ENCODE measurements at regions of chr17 and their contacts with region 1.

Region 1: DNA sequence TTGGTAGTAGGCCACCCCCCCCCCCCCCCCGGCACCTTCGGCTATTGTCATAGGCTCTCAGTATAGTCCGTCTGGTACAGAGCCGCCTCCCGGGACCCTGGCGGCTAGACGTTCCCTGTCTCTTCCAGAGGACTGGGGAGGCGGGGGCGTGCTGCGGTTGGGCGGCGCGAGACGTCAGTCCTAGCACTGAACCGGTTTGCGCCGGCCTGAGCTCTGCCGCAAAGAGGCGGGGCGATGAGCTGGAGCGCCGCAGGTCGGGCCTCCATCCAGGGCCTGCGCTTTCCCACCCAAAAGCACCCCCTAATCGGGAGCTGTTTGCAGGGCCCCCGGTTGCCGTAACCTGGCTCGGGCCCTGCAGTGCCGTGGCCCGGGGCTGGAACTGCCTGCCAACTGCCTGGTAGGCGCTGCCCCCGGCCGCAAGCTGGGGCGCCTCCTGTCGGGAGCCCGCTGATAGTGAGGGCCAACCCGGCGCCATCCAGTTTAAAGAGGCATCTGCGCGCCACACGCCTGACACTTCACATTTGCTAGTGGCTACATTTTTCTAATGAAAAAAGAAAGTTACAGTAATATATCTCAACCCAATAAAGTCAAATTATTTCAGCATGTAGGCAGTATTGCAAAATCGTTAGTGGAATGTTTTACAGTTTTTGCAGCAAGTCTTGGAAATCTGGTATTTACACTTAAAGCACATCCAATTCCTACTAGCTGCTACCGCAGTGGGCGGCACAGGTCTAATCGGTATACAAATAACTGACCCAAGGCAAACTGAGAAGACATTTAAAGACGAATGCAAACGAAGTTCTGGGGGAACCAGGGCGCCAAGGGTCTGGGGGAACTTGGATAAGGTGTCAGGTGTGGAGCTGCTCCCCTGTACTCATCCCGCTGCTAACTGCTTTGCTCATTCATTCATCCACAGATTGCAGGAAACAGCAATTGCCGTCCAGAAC is 748 bp upstream of the USP22 start:
- DNase-seq: peak in 1 of 2 donors; percentile 99
- H3K4me3 ChIP-seq: peak overlapping the region; percentile 81 to 82
- H3K27ac ChIP-seq: peak overlapping the region; percentile 72 to 89
- H3K4me1 ChIP-seq: peaks cover 4 to 21% of the 10 kb centered on the region in 2 donors
- H3K27me3 ChIP-seq: no peaks in the 10 kb centered on the region
- CTCF ChIP-seq: peak; percentile 88 to 93 (median 92)

Region 2: GRCh38 chr17:21010705-21011606 is 32.6 kb before region 1 on chr17:
- intact Hi-C with region 1: loop called (anchors 5 kb)
- DNase-seq: no peak
- H3K4me3 ChIP-seq: no peak overlapping the region
- H3K27ac ChIP-seq: no peak overlapping the region
- H3K4me1 ChIP-seq: no peaks in the 10 kb centered on the region
- H3K27me3 ChIP-seq: no peaks in the 10 kb centered on the region
- CTCF ChIP-seq: no peak

Region 3: DNA sequence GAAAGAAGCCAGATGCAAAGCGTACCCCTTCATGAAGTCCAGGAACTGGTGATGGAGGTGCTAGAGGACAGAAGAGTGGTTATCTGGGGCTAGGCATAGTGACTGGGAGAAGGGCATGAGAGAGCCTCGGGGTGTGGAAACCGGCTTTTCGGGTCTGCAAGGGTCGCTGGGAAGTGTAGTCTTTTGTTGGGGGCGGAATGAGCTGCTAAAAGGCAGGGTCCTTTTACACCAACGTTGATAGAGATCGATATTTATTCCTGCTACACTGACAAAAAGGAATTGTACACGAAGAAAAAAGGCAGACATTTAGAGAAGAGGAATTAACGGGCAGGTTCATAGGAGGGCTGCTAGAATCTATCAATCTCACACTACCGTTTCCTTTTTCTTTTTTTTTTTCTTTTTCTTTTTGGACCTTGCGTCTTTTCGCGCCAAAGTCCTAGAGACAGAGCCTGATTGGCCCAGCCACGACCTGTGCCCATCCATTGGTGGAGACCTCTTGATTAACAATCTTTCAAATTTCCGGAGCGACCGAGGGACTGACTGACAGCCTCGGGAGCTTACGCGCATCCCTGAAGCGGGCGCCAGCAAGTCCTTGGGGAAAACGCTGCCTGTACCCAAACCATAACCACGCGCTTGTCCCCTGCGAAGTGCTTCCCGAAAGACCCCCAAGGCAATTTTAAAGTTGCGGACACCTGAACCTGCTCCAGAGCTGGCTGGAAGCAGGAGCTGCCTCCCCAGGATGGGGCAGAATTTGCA is 55.6 kb after region 1 on chr17:
- intact Hi-C with region 1: loop called (anchors 5 kb)
- DNase-seq: peak in 1 of 2 donors; percentile 73
- H3K4me3 ChIP-seq: peak overlapping the region; percentile 56 to 77
- H3K27ac ChIP-seq: no peak overlapping the region
- H3K4me1 ChIP-seq: peaks cover 0 to 5% of the 10 kb centered on the region in 2 donors
- H3K27me3 ChIP-seq: no peaks in the 10 kb centered on the region
- CTCF ChIP-seq: no peak

Region 4: GRCh38 chr17:21161498-21162393 is 118.2 kb after region 1 on chr17:
- intact Hi-C with region 1: loop called (anchors 5 kb)
- DNase-seq: no peak
- H3K4me3 ChIP-seq: peak overlapping the region in 1 of 2 donors; percentile 11
- H3K27ac ChIP-seq: peak overlapping the region; percentile 60 to 68
- H3K4me1 ChIP-seq: peaks cover 13 to 37% of the 10 kb centered on the region in 2 donors
- H3K27me3 ChIP-seq: no peaks in the 10 kb centered on the region
- CTCF ChIP-seq: no peak

Region 5: DNA sequence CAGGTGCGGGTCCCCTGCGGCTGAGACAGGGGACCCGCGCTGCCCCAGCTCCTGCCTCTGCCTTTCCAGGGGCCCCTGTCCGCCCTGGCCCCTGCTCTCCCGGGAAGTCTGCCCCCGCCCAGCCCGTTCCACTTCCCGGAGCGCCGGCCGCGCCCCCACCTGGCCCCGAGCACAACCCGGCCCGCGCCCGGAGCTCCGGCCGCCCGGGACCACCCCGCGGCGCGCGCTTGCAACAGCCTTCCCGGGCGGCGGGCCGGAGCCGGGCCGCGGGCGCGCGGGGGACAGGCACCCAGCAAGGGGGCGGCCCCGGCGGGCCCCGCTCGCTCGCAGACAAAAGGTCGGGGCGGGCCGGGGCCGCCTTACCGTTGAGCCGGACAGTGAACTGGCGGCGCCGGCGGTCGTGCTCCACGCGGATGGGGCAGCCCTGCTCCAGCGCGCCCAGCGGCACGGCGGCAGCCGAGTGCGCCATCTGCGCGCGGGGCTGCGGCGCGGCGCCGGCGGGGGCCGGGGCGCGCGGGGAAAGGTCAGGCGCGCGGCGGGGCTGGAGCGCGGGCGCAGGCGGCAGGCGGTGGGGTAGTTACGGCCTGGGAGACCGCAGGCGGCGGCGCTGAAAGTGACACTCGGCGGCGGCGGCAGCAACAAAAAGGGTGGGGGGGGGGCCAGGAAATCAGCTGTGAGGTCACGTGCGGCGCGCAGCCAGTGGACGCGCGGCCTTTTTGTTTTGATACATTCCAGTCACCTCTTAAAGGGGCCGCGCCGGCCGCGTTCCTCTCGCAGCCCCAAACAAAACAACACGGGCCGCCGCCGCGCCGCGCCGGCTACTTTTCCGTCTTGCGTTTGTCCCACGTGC is 209.5 kb after region 1 on chr17 and contains the start of gene NATD1:
- intact Hi-C with region 1: loop called (anchors 10 kb)
- DNase-seq: peak; percentile 63 to 94
- H3K4me3 ChIP-seq: peak within 1 kb of the TSS; percentile 50 to 86
- H3K27ac ChIP-seq: peak within 1 kb of the TSS; percentile 43 to 77
- H3K4me1 ChIP-seq: peaks cover 16 to 27% of the 10 kb centered on the region in 2 donors
- H3K27me3 ChIP-seq: no peaks in the 10 kb centered on the region
- CTCF ChIP-seq: peak in 1 of 3 experiments; percentile 15
- total RNA-seq, gene NATD1: 13.4 TPM

Region 6: DNA sequence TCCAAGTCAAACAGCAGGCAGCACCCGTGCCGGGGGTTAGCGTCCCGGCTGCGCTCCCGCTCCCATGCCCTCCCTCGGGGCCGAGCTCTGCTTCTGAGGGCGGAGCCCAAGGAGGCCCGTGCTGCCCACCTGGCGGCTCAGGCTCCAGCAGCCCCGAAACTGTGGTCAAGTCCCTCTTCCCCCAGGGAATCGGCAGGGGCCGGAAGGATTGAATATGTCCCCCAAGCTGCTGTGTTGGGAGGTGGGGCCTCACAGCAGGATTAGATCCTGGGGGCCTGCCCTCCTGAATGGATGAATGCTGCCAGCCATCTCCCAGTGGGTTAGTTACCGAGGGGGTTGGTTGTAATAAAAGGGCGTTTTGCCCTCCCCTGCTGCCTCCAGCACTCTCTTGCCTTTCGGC is 274.9 kb after region 1 on chr17:
- intact Hi-C with region 1: loop called (anchors 5 kb)
- DNase-seq: peak in 1 of 2 donors; percentile 66
- H3K4me3 ChIP-seq: no peak overlapping the region
- H3K27ac ChIP-seq: no peak overlapping the region
- H3K4me1 ChIP-seq: peaks cover 0 to 2% of the 10 kb centered on the region in 2 donors
- H3K27me3 ChIP-seq: no peaks in the 10 kb centered on the region
- CTCF ChIP-seq: no peak